Aorta (tissue), 5 donors: ENCODE measurements at regions of chr2 and their contacts with region 1.

Region 1: DNA sequence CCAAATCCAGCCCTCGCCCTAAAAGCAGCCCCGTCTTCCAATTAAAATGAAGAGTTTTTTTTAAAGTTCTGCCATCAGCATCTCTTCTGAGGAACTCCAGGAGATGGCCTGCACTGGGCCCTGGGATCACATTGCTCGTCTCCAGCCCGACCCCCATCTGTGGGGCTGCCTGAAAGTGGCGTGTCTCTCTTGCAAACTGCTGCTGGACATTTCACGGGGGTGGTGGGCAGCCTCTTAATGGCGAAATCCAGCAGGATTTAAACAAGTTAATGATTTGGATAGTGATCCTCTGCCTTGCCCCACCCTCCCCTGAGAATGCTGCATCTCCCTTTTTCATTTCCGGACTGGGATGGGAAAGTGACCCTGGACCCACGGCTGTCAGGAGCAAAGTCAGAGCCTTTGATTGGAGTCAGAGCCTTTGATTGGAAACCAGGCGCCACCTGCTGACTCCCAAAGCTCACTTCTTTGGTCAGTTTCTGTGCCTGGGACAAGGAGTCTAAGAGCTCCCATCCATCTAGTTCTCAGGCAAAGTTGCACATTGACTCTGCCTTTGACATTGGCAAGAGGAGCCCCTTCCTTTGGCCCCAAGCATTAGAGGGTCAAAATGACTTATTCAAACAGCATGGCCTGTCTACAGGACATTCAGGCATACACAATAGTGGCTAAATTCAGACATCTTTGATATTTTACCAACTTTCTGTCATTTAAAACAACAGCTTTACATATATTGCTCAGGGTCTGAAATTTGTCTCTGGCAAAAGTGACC is 155.2 kb downstream of the SH3BP4 start:
- DNase-seq: peak in 1 of 2 donors; percentile 69
- ATAC-seq: peak; percentile 73
- H3K4me3 ChIP-seq: no peak overlapping the region
- H3K27ac ChIP-seq: no peak overlapping the region
- H3K4me1 ChIP-seq: no peaks in the 10 kb centered on the region
- H3K27me3 ChIP-seq: no peaks in the 10 kb centered on the region

Region 2: DNA sequence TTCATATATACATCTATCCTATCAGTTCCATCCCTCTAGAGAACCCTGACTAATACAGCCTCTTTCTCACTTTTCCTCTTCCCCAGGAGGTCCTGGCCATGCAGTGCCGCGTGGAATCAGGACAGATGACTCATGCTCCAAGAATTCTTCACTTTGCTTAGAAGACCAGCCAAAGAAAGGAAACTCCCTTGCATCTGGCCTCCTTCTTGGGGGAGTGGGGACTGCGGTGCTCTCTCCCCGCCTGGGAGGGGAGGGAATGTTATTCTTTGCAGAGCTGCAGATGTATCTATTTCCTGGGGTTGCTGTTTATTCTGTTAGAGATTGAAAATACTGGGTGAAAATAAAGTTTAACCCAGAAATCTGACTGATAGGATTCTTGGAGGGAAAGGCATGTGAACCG is 266.7 kb before region 1 on chr2:
- intact Hi-C with region 1: no loop called
- DNase-seq: peak in 1 of 2 donors; percentile 55
- ATAC-seq: no peak
- H3K4me3 ChIP-seq: no peak overlapping the region
- H3K27ac ChIP-seq: no peak overlapping the region
- H3K4me1 ChIP-seq: no peaks in the 10 kb centered on the region
- H3K27me3 ChIP-seq: no peaks in the 10 kb centered on the region

Region 3: DNA sequence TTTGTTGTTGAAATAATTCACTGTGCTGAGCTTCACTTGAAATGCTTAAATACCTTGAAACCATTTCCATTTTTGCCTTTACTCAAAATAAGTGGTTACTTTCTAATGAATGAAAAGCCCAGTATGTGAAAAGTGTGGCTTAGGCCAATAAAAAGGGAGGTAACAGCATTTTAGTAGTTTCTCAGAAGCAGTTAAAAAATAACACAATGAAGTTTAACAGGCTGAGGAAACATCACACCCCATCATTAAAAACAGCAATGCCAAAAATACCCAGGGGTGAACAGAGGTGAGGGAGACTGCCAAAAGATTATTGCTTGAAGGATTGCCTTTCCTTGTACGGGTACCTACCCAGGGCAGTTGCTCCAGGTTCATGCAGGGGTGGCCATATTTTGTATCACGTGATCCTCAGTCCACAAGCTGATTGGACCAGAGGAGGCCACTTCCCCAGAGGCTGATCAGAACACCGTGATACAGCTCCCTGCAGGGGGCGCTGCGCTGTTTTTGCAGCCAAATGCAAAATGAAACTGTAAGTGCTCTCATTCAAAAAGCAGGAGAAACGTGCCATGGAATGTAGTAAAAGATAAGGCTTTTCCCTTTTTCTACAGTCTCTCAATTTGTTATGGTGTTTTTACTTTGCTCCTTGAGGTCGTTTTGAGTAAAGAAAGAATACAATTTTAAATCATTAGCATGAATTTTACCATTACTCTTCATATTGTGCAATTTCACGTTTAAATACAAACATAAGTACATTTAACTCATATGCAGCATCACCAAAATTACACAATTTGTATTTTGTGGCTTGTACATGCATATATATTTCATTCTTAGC is 225.4 kb before region 1 on chr2:
- intact Hi-C with region 1: loop called (anchors 2 to 5 kb)
- DNase-seq: peak; percentile 89 to 94
- ATAC-seq: peak; percentile 94
- H3K4me3 ChIP-seq: peak overlapping the region in 1 of 2 donors; percentile 12
- H3K27ac ChIP-seq: peak overlapping the region in 1 of 2 donors; percentile 58
- H3K4me1 ChIP-seq: no peaks in the 10 kb centered on the region
- H3K27me3 ChIP-seq: no peaks in the 10 kb centered on the region

Region 4: DNA sequence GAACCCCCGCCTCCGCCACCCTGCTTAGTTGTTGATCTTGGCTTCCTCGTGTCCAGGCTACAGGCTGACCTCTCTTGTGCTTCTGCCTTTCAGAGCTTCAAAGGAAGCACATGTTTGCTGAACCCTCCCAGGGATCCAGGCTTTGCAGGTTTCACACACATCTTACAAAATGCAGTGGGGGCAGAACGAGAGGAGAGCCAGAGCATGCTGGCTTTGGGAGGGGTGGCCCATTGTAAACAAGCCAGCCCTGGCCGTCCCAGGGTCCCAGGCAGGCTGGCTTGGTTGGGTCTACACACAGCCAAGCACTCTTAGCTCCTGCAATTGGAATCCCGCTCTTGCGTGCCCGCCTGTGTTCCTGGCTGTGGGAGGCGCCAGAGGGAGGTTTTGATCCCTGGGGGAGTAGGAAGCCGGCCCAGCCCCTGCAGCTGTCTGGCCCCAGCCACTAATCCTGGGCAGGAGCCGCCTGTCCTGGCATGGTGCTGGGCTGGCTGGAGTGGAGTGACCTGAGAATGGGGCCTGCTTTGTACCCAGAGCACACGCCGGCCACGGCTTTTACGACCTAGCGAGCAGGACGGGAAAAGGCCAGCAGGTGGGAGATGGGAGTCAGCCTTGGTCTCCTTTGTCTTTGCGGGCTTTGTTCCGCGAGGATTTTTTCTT is 101.3 kb before region 1 on chr2:
- intact Hi-C with region 1: loop called in 1 of 2 experiments (anchors 5 kb)
- DNase-seq: peak; percentile 65 to 87
- ATAC-seq: peak; percentile 66
- H3K4me3 ChIP-seq: no peak overlapping the region
- H3K27ac ChIP-seq: no peak overlapping the region
- H3K4me1 ChIP-seq: no peaks in the 10 kb centered on the region
- H3K27me3 ChIP-seq: no peaks in the 10 kb centered on the region

Region 5: DNA sequence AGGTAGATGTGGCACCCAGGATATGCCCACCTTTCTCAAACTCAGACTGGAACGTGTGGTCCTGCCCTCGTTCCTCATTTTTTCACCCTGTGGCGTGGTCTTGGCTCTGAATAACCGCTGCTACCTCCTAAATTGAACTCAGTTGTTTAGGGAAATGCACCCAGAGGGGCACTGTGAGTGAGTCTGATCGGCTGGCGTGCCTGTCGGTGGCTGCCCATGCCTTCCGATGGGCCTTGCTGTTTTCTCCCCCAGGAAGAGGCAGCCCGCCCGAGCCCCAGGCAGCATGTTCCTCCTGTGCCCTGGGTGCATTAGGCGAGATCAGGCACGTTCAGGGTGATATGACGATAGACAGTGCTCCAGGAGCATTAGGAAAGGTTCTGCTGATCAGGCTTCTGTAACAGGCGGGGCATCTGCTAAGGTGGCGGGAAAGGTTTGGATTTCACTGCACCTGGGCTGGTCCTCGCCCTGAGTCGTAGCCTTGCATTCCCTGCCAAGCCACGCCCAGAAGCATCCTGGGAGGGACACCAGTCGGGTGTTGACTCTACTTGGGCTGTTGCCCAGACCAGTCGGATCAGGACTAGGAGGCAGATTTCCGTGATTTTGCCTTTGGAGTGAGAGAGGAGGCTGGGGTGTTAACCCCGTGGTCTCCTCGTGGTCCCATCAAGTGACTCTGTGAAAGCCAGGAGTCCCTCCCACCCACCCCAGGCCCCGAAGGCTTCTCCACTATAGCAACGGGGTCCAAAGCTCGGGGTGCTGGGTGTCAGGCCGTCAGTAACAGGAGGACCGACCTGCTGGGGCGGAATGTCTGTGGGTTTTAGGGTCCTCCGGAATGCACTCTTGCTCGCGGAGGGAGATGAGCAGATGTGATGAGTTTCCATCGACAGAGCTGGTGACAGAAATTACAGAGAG is 80.2 kb before region 1 on chr2:
- intact Hi-C with region 1: no loop called
- DNase-seq: no peak
- ATAC-seq: no peak
- H3K4me3 ChIP-seq: no peak overlapping the region
- H3K27ac ChIP-seq: no peak overlapping the region
- H3K4me1 ChIP-seq: no peaks in the 10 kb centered on the region
- H3K27me3 ChIP-seq: no peaks in the 10 kb centered on the region

Region 6: GRCh38 chr2:235077046-235077445 is 30.0 kb before region 1 on chr2:
- intact Hi-C with region 1: no loop called
- DNase-seq: no peak
- ATAC-seq: no peak
- H3K4me3 ChIP-seq: no peak overlapping the region
- H3K27ac ChIP-seq: no peak overlapping the region
- H3K4me1 ChIP-seq: no peaks in the 10 kb centered on the region
- H3K27me3 ChIP-seq: peaks cover 0 to 4% of the 10 kb centered on the region in 2 donors